ENCODE measurements at regions of chr2 and their contacts with region 1.

Region 1: DNA sequence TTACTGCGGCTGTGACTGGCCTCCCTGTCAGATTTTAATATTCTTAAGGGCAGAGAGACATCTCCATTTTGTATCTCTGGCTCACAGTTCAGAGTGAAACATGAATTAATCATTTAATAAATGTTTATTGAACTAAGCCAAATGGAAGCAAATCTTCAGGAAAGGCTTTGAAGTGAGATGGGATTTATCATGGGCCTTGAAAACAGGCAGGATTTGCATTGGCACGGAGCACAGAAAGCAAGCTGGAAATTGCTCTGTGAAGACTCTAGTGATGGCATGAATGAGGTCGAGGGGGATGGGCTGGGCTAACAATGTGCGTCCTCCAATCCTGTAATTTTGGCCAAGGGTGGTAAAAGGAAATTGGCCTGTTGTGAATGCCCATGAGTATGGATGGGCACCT is 369.8 kb upstream of the SOX11 start:
- DNase-seq: no peak
- H3K4me3 ChIP-seq: no peak overlapping the region
- H3K27ac ChIP-seq: no peak overlapping the region
- H3K4me1 ChIP-seq: no peaks in the 10 kb centered on the region
- H3K27me3 ChIP-seq: no peaks in the 10 kb centered on the region
- CTCF ChIP-seq: no peak

Region 2: DNA sequence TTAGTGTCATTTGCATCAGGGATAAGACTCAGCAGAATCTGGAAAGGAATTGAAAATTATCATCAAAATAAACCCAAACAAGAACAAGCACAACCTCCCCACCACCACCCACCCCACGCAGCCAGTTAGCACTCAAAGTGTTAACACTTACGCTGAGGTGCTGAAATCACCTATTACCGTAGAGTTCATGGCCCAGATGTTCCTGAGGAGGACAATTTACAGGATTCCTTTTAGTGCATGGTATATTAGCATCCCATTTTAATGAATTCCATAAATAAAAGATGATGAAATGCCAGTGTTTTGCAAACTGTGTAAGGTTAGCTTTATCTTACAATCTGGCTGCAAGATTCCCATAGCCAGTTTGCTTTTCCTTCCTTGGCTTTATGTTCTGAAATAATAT is 10.5 kb after region 1 on chr2:
- CTCF ChIA-PET with region 1: no interaction called
- POLR2A ChIA-PET with region 1: no interaction called
- intact Hi-C with region 1: no loop called
- DNase-seq: no peak
- H3K4me3 ChIP-seq: no peak overlapping the region
- H3K27ac ChIP-seq: no peak overlapping the region
- H3K4me1 ChIP-seq: no peaks in the 10 kb centered on the region
- H3K27me3 ChIP-seq: peaks cover 9% of the 10 kb centered on the region; the same call in 1 of the 2 replicates
- CTCF ChIP-seq: no peak

Region 3: GRCh38 chr2:5453220-5454050 is 131.0 kb after region 1 on chr2:
- CTCF ChIA-PET with region 1: no interaction called
- POLR2A ChIA-PET with region 1: no interaction called
- intact Hi-C with region 1: no loop called
- DNase-seq: no peak
- H3K4me3 ChIP-seq: no peak overlapping the region
- H3K27ac ChIP-seq: no peak overlapping the region
- H3K4me1 ChIP-seq: no peaks in the 10 kb centered on the region
- H3K27me3 ChIP-seq: peaks cover 46% of the 10 kb centered on the region
- CTCF ChIP-seq: no peak

Region 4: DNA sequence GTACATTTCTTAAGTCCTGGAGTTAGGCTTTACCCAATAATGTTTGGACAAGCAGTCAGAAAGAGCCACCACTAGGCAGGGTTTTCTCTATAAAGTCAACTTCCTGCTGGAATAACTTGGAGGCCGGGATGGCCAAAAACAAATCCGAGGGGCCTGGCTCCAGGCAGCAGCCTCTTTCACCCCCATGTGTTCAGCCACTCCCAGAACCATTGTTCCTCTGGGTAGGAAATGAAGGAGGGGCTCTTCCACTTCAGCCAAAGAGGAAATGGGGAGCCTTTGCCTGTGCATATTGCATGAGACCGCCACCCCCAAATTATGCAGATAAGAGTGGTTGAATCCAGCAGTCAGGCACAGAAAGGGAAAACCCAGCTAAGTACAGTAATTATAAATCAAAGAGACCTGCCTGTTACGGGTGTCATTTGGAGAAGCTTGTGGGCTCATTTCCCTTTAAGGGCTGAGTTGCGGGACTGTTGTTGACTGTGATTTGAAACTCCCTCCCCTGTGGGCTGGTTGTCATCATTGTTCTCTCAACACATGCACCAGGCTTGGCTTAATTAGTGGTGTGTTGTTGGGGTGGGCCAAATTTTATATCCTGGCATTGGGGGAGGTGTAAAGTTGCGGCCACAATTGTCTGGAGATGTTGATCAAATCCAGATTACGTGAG is 157.0 kb after region 1 on chr2:
- CTCF ChIA-PET with region 1: no interaction called
- POLR2A ChIA-PET with region 1: no interaction called
- intact Hi-C with region 1: no loop called
- DNase-seq: no peak
- H3K4me3 ChIP-seq: no peak overlapping the region
- H3K27ac ChIP-seq: no peak overlapping the region
- H3K4me1 ChIP-seq: no peaks in the 10 kb centered on the region
- H3K27me3 ChIP-seq: peaks cover 29% of the 10 kb centered on the region; the same call in 1 of the 2 replicates
- CTCF ChIP-seq: no peak

Region 5: GRCh38 chr2:6516674-6517073 is 1194.3 kb after region 1 on chr2:
- CTCF ChIA-PET with region 1: no interaction called
- POLR2A ChIA-PET with region 1: interaction called, 32 read pairs
- intact Hi-C with region 1: no loop called
- DNase-seq: no peak
- H3K4me3 ChIP-seq: no peak overlapping the region
- H3K27ac ChIP-seq: no peak overlapping the region
- H3K4me1 ChIP-seq: no peaks in the 10 kb centered on the region
- H3K27me3 ChIP-seq: peaks cover 45% of the 10 kb centered on the region
- CTCF ChIP-seq: no peak

Measured in PC-9 (cell line).